ENCODE measurements at regions of chr18 and their contacts with region 1.

Region 1: GRCh38 chr18:35227254-35227653 is 13.6 kb upstream of the ZNF397 start:
- DNase-seq: no peak
- H3K4me3 ChIP-seq: no peak overlapping the region
- H3K27ac ChIP-seq: no peak overlapping the region
- H3K4me1 ChIP-seq: peaks cover 0 to 5% (median 2%) of the 10 kb centered on the region in 4 donors
- H3K27me3 ChIP-seq: no peaks in the 10 kb centered on the region
- CTCF ChIP-seq: no peak
- EP300 ChIP-seq: no peak
- POLR2A ChIP-seq: no peak

Region 2: GRCh38 chr18:35369126-35369525 is 141.9 kb after region 1 on chr18:
- intact Hi-C with region 1: loop called (anchors 10 kb)
- DNase-seq: no peak
- H3K4me3 ChIP-seq: no peak overlapping the region
- H3K27ac ChIP-seq: no peak overlapping the region
- H3K4me1 ChIP-seq: no peaks in the 10 kb centered on the region
- H3K27me3 ChIP-seq: no peaks in the 10 kb centered on the region
- CTCF ChIP-seq: no peak
- EP300 ChIP-seq: no peak
- POLR2A ChIP-seq: no peak